ENCODE measurements at regions of chr14 and their contacts with region 1.

Region 1: DNA sequence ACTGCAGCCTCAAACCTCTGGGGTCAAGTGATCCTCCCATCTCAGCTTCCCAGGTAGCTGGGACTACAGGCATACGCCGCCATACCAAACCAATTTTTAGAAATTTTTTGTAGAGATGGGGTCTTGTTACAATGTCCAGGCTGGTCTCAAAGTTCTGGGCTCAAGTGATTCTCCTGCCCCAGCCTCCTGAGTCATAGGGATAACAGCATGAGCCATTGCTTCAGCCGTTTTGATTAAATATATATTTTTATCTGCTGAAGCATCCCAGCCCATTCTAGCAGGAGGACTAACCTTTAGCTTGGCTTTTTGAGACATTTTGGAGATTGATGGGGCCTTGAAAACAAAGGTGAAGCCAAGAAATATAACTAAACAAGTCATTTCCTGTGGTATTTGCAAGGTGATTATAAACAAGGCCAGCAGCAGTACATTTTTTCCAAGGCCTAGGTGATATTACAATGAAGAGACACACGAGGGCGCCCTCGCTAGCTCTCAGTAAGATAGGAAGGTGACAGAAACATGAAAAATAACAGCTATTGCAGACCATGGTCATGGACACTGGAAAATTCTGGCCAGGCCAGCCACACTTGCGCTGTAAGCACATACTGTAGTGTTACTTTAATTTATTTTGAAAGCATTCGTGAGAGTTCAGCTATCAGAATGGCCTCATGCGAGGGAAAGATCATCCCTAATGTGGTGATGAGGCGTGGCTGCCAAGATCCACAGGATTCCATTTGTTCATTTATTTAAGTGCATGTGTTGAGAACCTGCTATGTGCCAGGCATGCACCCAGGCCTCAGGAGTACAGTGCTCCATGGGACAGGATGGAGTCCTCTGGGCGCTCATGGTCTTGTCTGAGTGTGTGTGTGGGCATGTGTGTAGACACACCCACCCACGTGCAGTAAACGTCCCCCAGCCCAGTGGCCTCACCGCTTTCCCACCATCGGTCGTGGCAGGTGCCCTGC is 63.5 kb downstream of the DGLUCY start:
- DNase-seq: no peak
- ATAC-seq: peak; percentile 86
- H3K4me3 ChIP-seq: no peak overlapping the region
- H3K27ac ChIP-seq: no peak overlapping the region
- H3K4me1 ChIP-seq: no peaks in the 10 kb centered on the region
- H3K27me3 ChIP-seq: no peaks in the 10 kb centered on the region
- CTCF ChIP-seq: peak; percentile 84

Region 2: DNA sequence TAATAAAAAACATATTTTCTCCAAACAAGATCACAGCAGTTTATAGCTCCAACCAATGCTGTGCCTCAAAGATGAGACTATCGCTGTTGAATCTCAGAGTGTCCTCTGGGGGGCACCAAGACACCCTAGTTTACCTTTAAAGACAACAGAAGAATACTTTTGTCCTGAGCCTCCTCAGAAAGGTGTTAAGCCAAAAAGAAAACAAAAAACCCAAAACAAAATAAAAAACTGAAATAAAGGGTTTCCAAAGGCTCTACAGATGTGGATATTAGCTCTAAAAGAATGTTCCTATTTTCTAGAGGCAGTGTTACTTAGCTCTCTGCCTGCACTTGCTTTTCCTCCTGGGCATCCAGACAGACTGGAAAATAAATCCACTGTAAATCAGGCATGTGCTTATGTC is 274.3 kb before region 1 on chr14:
- intact Hi-C with region 1: loop called (anchors 5 kb)
- DNase-seq: no peak
- ATAC-seq: peak; percentile 91
- H3K4me3 ChIP-seq: no peak overlapping the region
- H3K27ac ChIP-seq: no peak overlapping the region
- H3K4me1 ChIP-seq: no peaks in the 10 kb centered on the region
- H3K27me3 ChIP-seq: no peaks in the 10 kb centered on the region
- CTCF ChIP-seq: peak; percentile 74

Region 3: DNA sequence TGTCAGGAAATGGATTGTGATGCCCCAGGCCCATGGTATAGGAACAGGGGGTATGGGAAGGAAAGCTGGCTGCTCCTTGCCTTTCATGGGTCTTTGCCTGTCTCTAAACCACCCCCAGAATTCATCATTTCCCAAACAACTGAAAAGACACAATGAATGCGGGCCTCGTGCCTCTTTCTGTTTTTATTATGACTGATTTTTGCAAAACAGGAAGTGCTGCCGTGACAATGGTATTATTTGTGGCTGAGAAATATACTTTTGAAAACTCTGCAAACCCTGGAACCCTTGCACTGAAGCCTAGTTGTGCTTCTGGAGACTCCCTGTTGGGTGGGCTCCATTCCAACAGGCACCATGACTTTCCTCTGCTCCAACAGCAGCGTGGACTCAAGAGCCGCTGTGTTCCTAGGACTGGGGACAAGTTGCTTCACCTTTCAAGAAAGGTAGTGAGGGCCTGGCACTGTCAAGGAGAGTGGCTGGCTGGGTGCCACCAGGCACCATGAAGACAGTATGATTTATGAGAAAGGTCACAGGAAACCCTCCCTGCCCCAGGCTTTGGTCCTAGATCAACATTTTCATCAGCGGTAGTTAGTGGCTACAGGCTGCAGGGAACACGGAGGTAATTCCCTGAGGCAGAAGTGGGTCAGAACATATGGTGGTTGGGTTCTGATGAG is 68.3 kb before region 1 on chr14:
- intact Hi-C with region 1: no loop called
- DNase-seq: peak; percentile 67
- ATAC-seq: no peak
- H3K4me3 ChIP-seq: no peak overlapping the region
- H3K27ac ChIP-seq: peak overlapping the region; percentile 31
- H3K4me1 ChIP-seq: peaks cover 22% of the 10 kb centered on the region
- H3K27me3 ChIP-seq: no peaks in the 10 kb centered on the region
- CTCF ChIP-seq: no peak

Region 4: GRCh38 chr14:91286530-91286937 is 109.2 kb after region 1 on chr14:
- intact Hi-C with region 1: loop called (anchors 5 kb)
- DNase-seq: peak; percentile 80
- ATAC-seq: peak; percentile 90
- H3K4me3 ChIP-seq: no peak overlapping the region
- H3K27ac ChIP-seq: no peak overlapping the region
- H3K4me1 ChIP-seq: no peaks in the 10 kb centered on the region
- H3K27me3 ChIP-seq: no peaks in the 10 kb centered on the region
- CTCF ChIP-seq: peak; percentile 91

Region 5: DNA sequence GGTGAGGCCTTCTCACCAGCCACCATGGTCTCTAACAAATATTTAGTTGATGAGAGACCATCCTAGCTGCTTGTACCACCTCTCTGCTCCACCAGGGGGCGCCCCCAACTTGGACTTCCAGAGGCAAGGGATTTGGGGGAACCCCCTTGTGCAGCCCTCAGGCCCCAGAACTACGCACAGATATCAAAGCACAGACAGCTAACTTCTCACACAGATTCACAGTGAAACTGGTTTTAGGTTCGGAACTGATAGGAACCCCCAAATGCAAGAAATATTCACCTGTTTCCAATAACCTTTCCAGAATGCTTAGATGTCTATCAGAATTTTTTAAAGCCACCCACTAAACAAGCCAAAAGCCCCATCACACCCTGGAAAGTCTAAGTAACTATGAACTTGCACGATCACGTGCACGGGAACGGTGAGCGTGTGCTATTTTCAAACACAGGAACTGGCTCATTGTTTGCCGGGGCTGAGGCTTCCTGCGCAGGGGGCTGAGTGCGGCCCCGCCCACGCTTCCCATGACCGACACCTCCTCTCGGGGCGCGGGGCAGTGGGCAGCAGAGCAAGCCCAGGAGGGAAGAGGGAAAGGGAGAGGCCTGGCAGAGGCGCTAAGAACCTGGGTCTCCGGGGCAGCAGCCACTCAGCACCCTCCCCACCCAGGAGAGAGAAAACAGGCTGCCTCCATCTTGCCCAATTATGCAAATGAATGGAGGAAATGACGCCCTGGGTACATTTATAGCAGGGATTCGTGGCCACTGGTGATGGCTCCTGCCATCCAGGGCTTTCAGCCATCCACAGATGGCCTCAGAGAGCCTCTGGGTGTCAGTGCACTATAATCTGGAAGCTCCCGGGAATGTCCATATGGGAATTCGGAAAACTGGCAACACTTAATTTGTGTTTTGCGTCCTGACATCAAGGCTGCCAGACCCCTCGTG is 146.6 kb after region 1 on chr14:
- intact Hi-C with region 1: no loop called
- DNase-seq: peak; percentile 94
- ATAC-seq: peak; percentile 90
- H3K4me3 ChIP-seq: peak overlapping the region; percentile 44
- H3K27ac ChIP-seq: peak overlapping the region; percentile 71
- H3K4me1 ChIP-seq: peaks cover 38% of the 10 kb centered on the region
- H3K27me3 ChIP-seq: no peaks in the 10 kb centered on the region
- CTCF ChIP-seq: peak; percentile 99

Region 6: DNA sequence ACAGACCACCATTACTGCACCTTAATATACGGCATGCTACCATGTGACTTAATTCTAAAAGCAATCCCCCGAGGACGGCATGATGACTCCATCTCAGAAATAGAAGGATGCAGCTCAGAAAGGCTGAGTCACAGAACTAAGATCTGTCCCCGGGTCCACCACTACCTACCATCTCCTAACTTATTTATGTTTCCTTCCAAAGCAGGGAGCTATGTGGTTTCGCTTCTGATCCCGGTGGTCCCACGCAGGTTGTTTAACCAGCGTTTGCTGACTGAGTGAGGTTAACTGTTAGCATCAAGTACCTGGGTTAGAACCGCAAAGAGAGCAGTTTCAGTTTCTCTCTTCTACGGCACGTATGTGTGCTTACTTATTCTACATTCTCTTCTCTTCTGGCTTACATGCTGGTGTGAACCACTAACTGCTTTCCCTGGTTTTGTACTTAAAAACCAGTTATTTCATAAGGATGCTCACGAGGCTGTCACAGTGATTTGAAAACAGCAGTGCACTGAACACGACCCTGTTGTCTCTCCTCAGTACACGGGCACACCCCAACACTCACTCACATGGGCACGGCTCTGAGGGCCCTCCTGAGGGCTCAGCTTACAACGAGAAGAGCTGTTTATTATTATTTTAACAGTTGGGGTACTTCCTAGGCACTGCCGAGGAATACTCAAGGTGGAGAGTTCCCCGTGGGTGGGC is 173.6 kb after region 1 on chr14:
- intact Hi-C with region 1: no loop called
- DNase-seq: no peak
- ATAC-seq: peak; percentile 40
- H3K4me3 ChIP-seq: peak overlapping the region; percentile 33
- H3K27ac ChIP-seq: peak overlapping the region; percentile 47
- H3K4me1 ChIP-seq: peaks cover 23% of the 10 kb centered on the region
- H3K27me3 ChIP-seq: no peaks in the 10 kb centered on the region
- CTCF ChIP-seq: no peak

Region 7: DNA sequence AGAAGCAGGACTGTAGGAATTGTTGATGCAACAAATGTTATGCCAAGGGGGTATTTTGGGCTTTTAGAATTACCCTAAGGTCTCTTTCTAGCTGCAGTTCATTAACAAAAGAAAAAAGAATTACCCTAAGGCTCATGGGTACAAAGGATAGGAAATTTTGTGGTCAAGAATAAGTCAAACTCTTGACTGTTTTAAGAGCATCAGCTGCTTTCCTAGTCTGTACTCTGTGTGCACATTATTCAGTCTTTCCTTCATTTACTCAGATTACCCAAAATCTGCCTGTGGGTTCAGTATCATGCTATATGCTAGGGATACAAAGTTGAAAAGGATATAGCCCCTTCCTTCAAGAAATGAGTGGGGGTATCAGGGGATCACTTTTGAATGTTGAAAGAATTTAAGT is 276.8 kb after region 1 on chr14:
- intact Hi-C with region 1: no loop called
- DNase-seq: no peak
- ATAC-seq: no peak
- H3K4me3 ChIP-seq: no peak overlapping the region
- H3K27ac ChIP-seq: no peak overlapping the region
- H3K4me1 ChIP-seq: no peaks in the 10 kb centered on the region
- H3K27me3 ChIP-seq: no peaks in the 10 kb centered on the region
- CTCF ChIP-seq: no peak